Activated naive CD4-positive, alpha-beta T cell treated with anti-CD3 and anti-CD28 coated beads for 36 hours (primary cell): ENCODE measurements at regions of chr9 and their contacts with region 1.

Region 1: DNA sequence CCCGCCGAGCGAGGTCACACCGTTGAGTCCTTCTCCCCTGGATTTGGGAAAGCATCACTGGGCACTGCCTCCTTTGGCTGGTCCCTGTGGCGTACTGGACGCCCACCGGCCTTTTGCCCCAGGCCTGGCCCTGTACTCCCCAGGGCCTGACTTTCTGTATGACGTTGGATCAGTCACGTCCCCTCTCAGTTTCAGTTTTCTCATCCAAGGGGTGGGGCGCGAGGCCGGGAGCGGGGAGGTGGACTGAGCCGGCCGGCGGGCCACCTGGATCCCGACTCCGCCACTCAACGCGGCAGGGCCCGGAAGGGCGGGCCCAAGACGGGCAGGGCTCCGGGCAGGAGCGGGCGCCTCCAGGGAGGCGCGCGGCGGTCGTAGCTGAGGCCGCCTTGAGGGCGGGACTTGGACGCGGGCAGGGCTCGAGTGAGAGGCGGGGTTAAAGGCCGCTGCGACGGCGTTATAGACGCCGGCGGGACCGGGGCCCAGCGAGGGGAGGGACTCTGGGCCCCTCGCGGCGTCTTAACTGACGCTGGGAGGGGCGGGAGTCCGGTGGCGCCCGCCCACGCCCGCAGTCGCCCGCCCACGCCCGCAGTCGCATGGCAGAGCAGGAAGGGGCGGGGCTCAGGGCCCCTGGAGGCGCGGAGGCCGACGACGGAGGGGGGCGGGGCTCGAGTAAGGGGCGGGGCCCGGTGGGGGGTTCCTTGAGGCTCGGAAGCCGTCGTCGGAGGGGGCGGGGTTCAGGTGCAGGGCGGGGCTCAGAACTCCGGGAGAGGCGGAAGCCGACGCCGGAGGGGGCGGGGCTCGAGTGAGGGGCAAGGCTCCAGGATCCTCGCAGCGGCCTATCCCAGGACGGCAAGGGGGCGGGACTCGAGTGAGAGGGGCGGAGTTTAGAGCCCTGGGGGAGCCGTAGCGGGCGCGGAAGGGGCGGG is 549 bp upstream of the CARD19 start:
- DNase-seq: peak; percentile 100
- H3K4me3 Mint-ChIP-seq: peak overlapping the region; percentile 84
- H3K27ac Mint-ChIP-seq: peak overlapping the region; percentile 95
- H3K4me1 Mint-ChIP-seq: peaks cover 74% of the 10 kb centered on the region
- H3K27me3 Mint-ChIP-seq: no peaks in the 10 kb centered on the region

Region 2: DNA sequence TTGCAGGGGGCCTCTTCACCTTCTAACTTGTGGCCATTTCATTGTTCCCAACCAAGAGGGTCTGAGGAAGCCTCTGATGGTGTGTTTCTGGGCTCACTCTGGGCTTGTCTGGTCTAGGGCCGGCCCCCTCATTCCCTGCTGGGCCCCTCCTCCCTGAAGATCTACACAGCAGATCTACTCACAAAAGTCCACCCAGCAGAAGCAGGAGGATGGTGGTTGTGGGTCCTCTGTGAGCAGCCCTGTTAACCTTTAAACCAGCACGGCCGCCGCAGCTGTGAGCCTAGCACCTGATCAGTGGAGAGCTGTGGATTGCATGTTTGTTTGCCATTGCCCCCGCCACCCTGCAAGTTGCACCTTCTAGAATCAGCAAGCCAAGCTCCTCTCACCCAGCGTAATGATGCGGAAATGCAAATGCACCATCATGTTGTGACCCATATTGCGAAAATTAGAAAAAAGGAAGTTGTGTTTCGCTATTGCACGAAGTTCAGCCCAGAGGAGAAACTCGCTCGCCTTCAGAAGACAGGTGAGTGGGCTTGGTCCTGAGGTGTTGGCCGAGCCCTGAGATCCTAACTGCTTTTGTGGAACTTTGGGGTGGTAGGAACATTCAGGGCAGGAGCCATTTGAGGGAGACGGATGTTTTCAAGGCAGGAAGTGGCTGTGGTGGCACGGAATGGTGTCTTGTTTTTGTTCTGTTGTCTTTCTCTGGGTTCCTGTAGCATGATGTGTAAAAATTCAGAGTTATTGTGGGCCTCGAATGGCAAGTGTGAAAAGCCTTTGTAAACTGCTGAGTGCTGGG is 131.4 kb before region 1 on chr9:
- CTCF ChIA-PET with region 1: no interaction called
- intact Hi-C with region 1: loop called (anchors 2 kb)
- DNase-seq: peak; percentile 86
- H3K4me3 Mint-ChIP-seq: peak overlapping the region; percentile 99
- H3K27ac Mint-ChIP-seq: peak overlapping the region; percentile 100
- H3K4me1 Mint-ChIP-seq: peaks cover 56% of the 10 kb centered on the region
- H3K27me3 Mint-ChIP-seq: no peaks in the 10 kb centered on the region

Region 3: GRCh38 chr9:93058355-93059096 is 36.9 kb before region 1 on chr9 and contains the start of gene SUSD3:
- CTCF ChIA-PET with region 1: interaction called, 4 read pairs
- intact Hi-C with region 1: loop called (anchors 1 kb)
- DNase-seq: peak; percentile 66
- H3K4me3 Mint-ChIP-seq: peak within 1 kb of the TSS; percentile 93
- H3K27ac Mint-ChIP-seq: peak within 1 kb of the TSS; percentile 99
- H3K4me1 Mint-ChIP-seq: peaks cover 55% of the 10 kb centered on the region
- H3K27me3 Mint-ChIP-seq: no peaks in the 10 kb centered on the region
- total RNA-seq, gene SUSD3: 62.7 to 68.3 TPM

Region 4: DNA sequence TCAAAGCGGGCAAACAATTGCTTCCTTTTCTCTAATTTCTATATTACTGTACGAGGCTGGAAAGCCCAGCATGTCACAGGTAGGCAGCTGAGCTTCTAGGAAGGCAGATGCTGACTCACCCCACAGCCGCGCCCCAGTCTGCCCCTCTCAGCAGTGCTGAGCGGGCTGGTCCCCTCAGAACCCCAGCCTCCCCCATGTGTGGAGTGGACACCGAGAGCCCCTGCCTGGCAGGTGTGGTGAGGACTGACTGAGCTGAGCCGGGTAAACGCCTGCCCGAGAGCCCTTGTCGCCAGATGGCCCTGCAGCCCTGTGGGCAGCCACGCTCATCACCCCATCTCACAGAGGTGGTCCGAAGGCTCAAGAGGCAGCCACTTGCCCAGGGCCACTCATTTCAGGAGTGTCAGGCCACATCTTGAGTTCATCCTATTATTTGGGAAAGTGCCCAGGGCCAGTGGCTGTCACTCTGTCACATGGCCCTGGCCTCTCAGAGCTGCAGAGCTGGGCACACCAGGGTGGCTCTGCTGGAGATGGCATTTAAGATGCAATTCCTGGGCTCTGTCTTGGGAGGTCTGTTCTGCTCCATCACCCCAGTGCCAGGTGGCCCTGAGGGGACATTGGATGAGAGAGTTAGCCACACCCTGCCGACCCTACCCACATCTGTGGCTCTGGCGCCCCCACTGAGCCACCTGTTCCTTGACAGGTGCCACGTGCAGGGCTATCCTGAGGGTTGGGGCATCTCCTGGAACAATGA is 13.0 kb after region 1 on chr9:
- CTCF ChIA-PET with region 1: interaction called, 20 read pairs
- intact Hi-C with region 1: loop called (anchors 1 kb)
- DNase-seq: peak; percentile 80
- H3K4me3 Mint-ChIP-seq: no peak overlapping the region
- H3K27ac Mint-ChIP-seq: peak overlapping the region; percentile 76
- H3K4me1 Mint-ChIP-seq: peaks cover 55% of the 10 kb centered on the region
- H3K27me3 Mint-ChIP-seq: no peaks in the 10 kb centered on the region

Region 5: DNA sequence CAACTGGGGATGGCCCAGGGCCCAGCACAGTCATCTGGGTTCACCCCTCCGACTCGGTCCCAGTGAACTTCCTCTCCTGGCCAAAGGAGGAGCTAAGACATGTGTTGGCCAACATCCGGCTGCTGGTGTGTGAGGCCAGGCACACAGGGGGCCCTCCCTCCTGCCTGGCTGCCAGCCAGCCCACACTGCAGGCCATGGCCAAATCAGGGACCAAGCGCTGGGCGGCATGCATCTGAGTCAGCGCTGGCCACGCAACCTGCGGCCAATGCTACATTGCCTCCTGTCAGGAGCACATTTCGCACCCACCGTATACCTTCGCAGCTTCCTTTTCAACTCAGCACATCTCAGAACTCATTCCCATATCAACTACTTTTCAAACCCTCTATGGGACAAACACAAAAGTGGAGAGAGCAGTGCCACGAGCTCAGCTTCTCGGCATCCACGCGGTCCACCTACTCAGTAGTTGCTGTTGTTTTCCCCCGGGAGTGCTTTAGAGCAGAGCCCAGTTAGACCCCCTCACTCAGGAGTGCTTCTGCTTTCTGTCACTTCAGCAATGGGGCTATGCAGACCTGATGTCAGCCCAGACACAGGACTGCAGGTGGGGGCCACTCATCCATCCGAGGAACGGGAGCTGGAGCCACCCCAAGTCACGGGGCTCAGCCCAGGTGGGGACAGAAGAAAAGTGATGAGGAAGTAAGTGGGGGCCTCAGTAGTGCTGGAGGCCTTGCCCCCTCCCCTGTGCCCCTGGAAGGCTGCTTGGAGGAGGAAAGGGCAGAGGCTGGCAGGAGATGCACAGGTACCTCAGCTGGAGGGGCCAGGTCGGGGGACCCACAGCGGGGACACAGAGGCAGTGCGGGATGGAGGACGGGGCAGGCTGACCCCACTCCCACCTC is 24.7 kb after region 1 on chr9:
- CTCF ChIA-PET with region 1: no interaction called
- intact Hi-C with region 1: no loop called
- DNase-seq: peak; percentile 72
- H3K4me3 Mint-ChIP-seq: no peak overlapping the region
- H3K27ac Mint-ChIP-seq: peak overlapping the region; percentile 68
- H3K4me1 Mint-ChIP-seq: peaks cover 17% of the 10 kb centered on the region
- H3K27me3 Mint-ChIP-seq: no peaks in the 10 kb centered on the region

Region 6: GRCh38 chr9:93453047-93453914 is 357.8 kb after region 1 on chr9 and contains the start of gene FAM120AOS:
- CTCF ChIA-PET with region 1: no interaction called
- intact Hi-C with region 1: loop called (anchors 1 kb)
- DNase-seq: peak; percentile 92
- H3K4me3 Mint-ChIP-seq: peak within 1 kb of the TSS; percentile 87
- H3K27ac Mint-ChIP-seq: peak within 1 kb of the TSS; percentile 84
- H3K4me1 Mint-ChIP-seq: peaks cover 45% of the 10 kb centered on the region
- H3K27me3 Mint-ChIP-seq: no peaks in the 10 kb centered on the region
- total RNA-seq, gene FAM120AOS: 25.5 to 26.0 TPM